Common myeloid progenitor, CD34-positive (primary cell): ENCODE measurements at regions of chr19 and their contacts with region 1.

Region 1: DNA sequence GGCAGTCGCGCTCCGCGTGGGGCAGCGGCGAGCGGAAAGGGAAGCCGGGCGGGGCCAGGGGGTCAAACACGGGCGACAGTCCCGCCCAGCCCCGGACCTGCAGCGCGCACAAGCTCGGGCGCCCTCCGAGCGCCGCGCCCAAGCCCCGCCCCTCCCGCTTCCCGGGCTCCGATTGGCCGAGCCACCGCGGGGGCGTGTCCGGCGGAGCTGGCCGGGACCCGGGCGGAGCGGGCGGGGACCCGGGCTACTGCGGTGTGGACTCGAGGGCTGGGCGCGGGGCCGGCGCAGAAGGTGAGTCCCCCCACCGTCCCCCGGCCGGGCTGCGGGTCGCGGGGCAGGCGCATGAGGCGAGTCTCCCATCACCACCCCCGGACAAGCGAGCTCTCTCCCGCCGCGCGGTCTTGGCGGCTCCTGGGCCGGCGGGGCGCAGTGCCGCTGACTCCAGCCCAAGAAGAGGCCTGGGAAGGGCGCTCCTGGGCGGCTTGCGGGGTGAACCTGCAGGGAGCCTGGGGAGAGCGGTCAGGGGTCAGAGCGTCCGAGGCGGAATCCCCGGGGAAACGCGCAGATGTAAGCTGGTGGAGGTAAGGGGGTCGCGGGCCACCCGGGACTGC is at the start of gene PLEKHF1:
- DNase-seq: peak; percentile 68 to 82 (median 77)
- H3K4me3 ChIP-seq: peak within 1 kb of the TSS; percentile 56 to 87 (median 80)
- H3K27ac ChIP-seq: no peak within 1 kb of the TSS
- H3K4me1 ChIP-seq: peaks cover 0 to 47% (median 37%) of the 10 kb centered on the region in 4 experiments
- H3K27me3 ChIP-seq: no peaks in the 10 kb centered on the region

Region 2: GRCh38 chr19:29576761-29577648 is 88.3 kb before region 1 on chr19:
- CTCF ChIA-PET with region 1: no interaction called
- POLR2A ChIA-PET with region 1: no interaction called
- DNase-seq: no peak
- H3K4me3 ChIP-seq: no peak overlapping the region
- H3K27ac ChIP-seq: no peak overlapping the region
- H3K4me1 ChIP-seq: no peaks in the 10 kb centered on the region
- H3K27me3 ChIP-seq: peaks cover 0 to 49% (median 19%) of the 10 kb centered on the region in 5 experiments

Region 3: DNA sequence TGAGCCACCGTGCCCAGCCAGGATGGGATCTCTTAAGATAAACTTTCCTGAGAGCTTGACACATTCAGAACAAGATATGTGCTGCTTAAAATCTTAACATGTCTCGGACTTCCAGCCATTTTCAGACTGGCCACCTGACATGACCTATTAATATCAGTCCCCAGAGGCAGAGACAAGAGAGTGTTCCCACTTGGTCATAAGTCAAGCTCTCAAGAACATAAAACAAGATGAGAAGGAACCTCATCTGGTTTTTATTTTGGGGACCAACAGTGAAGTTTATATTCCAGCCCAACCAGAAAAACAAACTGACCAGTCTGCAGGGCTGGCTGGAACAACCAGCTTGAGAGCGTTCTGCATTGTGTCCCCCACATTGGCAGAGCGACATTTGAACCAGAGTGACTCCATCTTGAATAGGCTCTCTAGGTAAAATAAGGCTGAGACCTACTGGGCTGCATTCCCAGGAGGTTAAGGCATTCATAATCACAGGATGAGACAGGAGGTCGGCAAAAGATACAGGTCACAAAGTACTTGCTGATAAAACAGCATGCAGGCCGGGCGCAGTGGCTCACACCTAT is 21.9 kb before region 1 on chr19:
- CTCF ChIA-PET with region 1: interaction called, 11 read pairs
- POLR2A ChIA-PET with region 1: no interaction called
- DNase-seq: no peak
- H3K4me3 ChIP-seq: no peak overlapping the region
- H3K27ac ChIP-seq: no peak overlapping the region
- H3K4me1 ChIP-seq: peaks cover 6 to 20% (median 17%) of the 10 kb centered on the region in 4 experiments
- H3K27me3 ChIP-seq: no peaks in the 10 kb centered on the region

Region 4: GRCh38 chr19:29680447-29680846 is 15.1 kb after region 1 on chr19:
- CTCF ChIA-PET with region 1: interaction called, 69 read pairs
- POLR2A ChIA-PET with region 1: interaction called, 3 read pairs
- DNase-seq: peak; percentile 80 to 85 (median 83)
- H3K4me3 ChIP-seq: peak overlapping the region in 3 of 7 experiments; percentile 13 to 45 (median 23)
- H3K27ac ChIP-seq: peak overlapping the region in 1 of 2 experiments; percentile 4
- H3K4me1 ChIP-seq: peaks cover 0 to 38% (median 30%) of the 10 kb centered on the region in 4 experiments
- H3K27me3 ChIP-seq: no peaks in the 10 kb centered on the region

Region 5: DNA sequence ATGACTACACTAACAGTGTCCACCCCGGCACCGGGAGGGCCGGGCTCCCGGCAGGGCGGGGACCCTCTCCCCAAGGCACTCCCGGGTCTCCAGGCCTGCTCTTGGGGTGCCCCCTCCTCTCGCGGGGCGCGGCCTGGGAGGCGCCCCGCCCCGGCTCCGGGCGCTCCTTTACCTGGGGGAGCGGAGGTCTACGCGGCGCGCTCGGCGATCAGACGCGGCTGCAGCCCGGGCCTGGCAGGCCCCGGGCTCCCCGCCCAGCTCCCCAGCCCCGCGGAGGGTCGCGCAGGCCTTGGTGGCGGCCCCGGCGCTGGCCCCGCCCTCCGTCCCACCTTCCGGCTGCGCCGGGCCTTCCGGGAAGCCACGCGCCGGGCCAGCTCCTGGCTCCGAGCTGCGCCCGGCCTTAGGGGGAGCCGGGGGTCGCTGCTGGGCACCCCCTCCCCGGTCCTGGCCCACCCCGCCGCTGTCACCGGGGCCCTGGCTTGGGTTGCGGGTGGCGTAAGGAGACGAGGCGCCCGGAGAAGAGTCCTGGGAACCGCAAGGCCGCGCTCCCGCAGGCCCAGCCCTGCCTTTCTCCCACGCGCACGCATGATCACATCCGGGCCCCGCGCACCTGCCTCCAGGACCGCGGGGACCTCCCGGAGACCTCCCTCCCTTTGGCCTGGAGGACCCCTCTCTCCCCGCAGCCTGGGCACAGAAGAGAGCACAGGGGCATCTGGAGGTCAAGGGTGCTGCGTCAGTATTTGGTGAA is 49.8 kb after region 1 on chr19 and contains the start of gene C19orf12:
- CTCF ChIA-PET with region 1: interaction called, 23 read pairs
- POLR2A ChIA-PET with region 1: no interaction called
- DNase-seq: peak; percentile 32 to 62 (median 47)
- H3K4me3 ChIP-seq: peak within 1 kb of the TSS; percentile 73 to 93 (median 84)
- H3K27ac ChIP-seq: peak within 1 kb of the TSS; percentile 74 to 90
- H3K4me1 ChIP-seq: peaks cover 7 to 52% (median 45%) of the 10 kb centered on the region in 4 experiments
- H3K27me3 ChIP-seq: no peaks in the 10 kb centered on the region